Colonic mucosa (tissue), 4 donors: ENCODE measurements at regions of chr1 and their contacts with region 1.

Region 1: DNA sequence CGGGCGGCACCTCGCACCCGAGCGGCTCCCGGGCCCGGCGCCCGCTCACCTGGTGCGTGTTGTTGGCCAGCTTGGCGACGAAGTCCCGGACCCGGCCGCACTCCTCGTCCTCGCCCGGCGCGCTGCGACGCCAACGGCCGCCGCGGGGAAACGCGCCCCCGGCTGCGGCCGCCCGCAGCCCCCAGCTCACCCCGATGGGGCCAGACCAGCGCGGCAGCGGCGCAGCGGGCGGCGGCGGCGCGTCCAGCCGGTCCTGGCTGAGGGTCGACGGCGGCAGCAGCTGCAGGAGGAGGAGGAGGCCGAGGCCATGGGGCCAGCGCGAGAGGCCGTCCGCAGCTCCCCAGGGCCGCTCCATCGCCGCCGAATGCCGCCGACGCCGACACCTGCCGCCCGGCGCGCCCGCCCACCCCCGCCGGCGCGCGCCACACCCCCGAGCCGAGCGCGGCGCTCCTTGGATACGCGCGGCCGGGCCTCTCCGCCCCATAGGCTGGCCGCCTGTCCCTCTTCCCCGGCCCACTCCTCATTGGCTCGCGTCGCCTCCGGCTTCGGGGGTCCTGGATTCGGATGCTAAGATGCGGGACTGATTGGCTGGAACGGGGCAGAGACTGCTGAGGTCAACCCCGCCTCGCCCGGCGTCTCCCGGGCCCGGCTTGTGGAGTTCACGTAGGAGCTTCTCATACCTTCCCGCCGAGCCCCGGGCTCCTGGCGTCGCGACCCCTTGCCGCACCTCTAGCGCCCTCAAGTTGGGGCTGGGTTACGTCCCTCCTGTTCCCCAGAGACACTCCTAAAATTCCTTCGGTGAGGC is at the start of gene SORT1:
- DNase-seq: peak; percentile 86
- H3K4me3 ChIP-seq: peak within 1 kb of the TSS; percentile 49
- H3K27ac ChIP-seq: peak within 1 kb of the TSS; percentile 35
- H3K4me1 ChIP-seq: peaks cover 9% of the 10 kb centered on the region
- H3K27me3 ChIP-seq: no peaks in the 10 kb centered on the region
- CTCF ChIP-seq: no peak
- total RNA-seq, gene SORT1: 76.2 to 134 TPM

Region 2: DNA sequence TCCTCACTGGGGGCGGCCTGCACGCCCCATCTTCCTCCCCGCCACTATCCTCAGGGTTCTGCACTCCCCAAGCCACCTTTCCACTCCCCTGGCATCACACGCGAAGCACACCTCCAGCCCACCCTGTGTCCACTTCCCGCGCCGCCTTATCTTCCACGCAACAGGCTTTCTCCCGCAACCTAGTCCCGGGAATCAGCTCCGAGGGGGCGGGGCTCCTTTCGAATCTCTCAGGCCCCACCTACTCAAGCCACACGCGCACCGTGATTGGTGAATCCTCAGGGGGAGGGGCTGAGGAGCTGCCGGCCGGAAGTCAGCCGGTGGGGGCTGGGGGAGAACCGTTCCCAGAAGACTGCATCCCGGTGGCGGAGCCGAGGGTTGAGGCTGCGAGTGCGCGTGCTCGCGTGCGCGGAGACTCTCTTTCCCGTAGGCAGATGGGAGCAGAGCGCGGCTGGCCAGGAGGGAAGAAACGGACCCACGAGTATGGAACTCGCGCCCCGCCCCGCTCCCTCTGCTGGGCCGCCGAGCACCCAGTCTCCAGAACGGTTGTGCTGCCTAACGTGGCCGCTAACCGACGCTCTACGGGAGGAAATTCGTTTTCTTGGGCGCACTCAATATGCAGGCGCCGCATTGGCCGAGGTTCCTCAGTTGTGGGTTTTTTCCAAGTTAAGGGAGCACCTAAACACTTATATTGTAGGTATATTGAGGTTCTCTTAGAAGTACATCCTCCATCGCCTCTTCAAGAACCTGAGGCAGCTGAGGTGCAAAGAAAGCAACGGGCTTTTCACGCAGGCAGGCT is 114.6 kb before region 1 on chr1 and contains the start of gene PSRC1:
- intact Hi-C with region 1: loop called (anchors 5 kb)
- DNase-seq: peak; percentile 99
- H3K4me3 ChIP-seq: peak within 1 kb of the TSS; percentile 57
- H3K27ac ChIP-seq: peak within 1 kb of the TSS; percentile 93
- H3K4me1 ChIP-seq: peaks cover 11% of the 10 kb centered on the region
- H3K27me3 ChIP-seq: no peaks in the 10 kb centered on the region
- CTCF ChIP-seq: peak; percentile 33
- total RNA-seq, gene PSRC1: 6.5 to 36.0 TPM

Region 3: DNA sequence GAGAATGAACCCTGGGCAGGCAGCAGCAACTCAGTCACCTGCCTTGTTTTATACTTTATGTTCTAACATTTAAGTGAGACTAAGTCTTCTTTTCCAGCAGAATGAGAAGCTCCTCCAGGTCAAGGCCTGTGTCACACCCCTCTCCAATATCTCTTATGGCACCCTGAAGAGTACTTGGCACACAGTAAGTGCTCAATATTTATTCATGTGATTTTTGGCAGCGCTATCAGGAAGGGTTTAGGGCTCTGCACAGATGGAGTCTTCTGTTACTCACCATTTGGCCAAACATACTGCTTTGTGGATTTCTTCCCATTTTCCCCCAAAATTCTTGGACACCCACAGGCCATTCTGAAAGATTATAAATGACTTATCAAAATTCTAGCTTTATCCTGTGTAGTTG is 47.1 kb before region 1 on chr1:
- intact Hi-C with region 1: loop called (anchors 5 kb)
- DNase-seq: no peak
- H3K4me3 ChIP-seq: no peak overlapping the region
- H3K27ac ChIP-seq: no peak overlapping the region
- H3K4me1 ChIP-seq: peaks cover 3% of the 10 kb centered on the region
- H3K27me3 ChIP-seq: no peaks in the 10 kb centered on the region
- CTCF ChIP-seq: no peak